ENCODE measurements at regions of chr10 and their contacts with region 1.

Region 1: DNA sequence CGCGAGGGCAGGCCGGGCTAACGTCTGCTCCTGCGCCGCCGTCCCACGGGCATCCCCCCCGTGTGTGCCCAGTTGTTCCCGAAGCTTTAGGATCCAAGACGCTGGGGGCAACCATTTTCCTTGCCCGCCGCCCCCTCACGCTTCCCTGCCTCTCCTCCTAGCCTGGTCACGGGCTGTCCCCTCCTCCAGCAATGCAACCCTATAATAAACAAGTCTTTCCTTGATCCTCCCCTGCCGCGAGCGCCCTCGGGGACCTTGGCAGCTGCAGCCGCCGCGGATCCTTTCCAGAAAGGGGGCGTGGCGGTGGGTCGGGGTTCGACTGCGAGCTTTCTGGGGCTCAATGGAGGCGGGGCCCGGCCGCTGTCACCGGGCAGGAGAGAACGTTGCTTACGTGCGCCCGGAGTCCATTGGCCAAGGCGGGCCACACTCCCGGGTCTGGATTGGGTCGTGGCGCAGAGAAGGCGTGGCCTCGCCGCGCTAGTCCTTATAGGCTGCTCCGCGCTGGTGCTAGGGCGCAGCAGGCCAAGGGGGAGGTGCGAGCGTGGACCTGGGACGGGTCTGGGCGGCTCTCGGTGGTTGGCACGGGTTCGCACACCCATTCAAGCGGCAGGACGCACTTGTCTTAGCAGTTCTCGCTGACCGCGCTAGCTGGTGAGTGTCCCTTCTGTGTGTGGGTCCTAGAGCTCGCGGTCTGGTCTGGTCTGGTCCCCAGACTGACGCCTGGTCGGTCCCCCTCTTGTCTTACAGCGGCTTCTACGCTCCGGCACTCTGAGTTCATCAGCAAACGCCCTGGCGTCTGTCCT is at the start of gene DDIT4:
- DNase-seq: peak; percentile 99 to 100
- H3K4me3 ChIP-seq: peak within 1 kb of the TSS; percentile 76 to 86
- H3K27ac ChIP-seq: peak within 1 kb of the TSS; percentile 93 to 98
- H3K4me1 ChIP-seq: peaks cover 8 to 22% of the 10 kb centered on the region in 2 donors
- H3K27me3 ChIP-seq: no peaks in the 10 kb centered on the region
- CTCF ChIP-seq: no peak
- total RNA-seq, gene DDIT4: 394 TPM

Region 2: DNA sequence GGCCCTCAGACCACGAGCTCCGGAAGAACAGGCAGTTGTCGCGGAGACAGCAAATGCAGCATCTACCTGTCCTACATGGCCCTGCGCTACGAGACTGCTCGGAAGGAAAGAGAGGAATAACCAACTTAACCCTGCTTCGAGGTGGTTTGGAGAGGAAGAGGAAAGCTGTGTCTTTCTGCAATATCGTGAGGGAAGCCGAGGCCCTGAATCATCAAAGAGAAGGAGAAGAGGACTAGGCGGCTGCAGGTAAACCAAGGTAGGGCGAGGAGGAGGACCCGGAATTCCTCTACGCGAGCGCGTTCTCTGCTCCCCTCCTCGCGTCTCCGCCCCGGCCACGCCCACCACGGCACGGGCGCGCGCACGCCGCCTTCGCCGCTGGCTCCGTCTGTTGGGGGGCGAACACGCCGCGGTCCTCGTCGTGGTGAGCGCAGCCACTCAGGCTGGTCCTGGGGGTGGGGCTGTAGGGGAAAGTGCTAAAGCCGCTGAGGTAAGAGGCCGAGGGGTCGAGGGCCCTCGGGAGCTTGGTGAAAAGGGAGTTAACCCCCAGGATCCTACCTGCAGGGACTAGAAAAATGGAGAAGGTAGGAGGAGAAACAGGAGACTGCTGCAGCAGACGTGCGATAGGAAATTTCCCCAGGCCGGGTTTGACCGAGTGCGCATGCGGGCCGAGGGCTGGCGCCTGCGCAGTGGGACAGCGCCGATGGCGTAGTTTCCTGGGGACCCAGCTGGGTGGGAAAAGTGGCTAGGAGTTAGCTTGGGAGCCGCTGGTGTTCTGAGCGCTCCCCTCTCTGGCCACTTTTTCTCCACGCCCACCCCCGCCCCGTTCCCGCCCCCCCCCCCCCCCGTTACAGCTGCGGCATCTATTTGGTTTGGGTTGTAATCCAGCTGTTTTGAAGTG is 57.7 kb before region 1 on chr10 and contains the starts of genes ANAPC16 and ASCC1:
- intact Hi-C with region 1: loop called (anchors 1 kb)
- DNase-seq: peak; percentile 66 to 94
- H3K4me3 ChIP-seq: peak within 1 kb of the TSS; percentile 64 to 71
- H3K27ac ChIP-seq: peak within 1 kb of the TSS; percentile 93 to 95
- H3K4me1 ChIP-seq: peaks cover 5 to 35% of the 10 kb centered on the region in 2 donors
- H3K27me3 ChIP-seq: no peaks in the 10 kb centered on the region
- CTCF ChIP-seq: no peak
- total RNA-seq, gene ANAPC16: 22.8 TPM
- total RNA-seq, gene ASCC1: 5.5 TPM

Region 3: GRCh38 chr10:72248468-72249151 is 25.0 kb before region 1 on chr10:
- intact Hi-C with region 1: loop called (anchors 1 kb)
- DNase-seq: peak; percentile 83 to 96
- H3K4me3 ChIP-seq: peak overlapping the region in 1 of 2 donors; percentile 44
- H3K27ac ChIP-seq: peak overlapping the region; percentile 91 to 97
- H3K4me1 ChIP-seq: peaks cover 49 to 85% of the 10 kb centered on the region in 2 donors
- H3K27me3 ChIP-seq: no peaks in the 10 kb centered on the region
- CTCF ChIP-seq: no peak

Region 4: DNA sequence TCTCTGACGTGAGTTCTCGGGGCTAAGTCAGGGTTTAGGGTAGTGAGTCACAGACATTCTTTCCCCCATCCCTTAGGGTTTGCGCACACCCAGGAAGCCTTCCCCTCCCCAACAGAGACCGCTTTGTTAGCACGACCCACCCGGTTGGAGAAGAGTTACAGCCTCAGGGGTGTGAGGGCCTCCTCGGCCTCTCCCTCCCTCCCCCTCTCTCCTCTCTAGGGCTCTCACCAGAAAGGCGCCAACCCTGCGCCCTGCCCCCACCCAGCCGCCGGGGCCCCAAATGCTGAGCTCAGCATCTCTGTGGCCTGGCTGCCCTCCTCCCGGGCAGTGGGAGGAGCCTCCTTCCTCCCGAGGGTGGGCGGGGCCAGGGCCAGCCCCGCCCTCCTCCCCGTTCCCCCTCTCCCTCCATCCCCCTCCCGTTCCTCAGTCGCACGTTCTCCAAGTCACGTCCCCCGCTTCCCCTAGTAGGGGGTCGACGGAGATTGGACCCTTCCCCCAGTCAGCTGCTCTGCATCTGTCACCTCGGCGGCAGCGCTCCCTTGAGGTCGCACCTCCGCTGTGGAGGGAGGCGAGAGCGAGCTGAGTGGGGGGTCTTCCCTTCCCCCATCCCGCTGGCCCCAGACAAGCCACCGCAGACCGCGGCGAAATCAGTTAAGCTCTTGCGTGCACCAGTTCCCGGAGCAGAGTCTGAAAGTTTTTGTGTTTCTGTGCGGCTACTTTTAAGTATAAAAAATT is 12.9 kb before region 1 on chr10:
- intact Hi-C with region 1: loop called (anchors 1 kb)
- DNase-seq: peak; percentile 58 to 89
- H3K4me3 ChIP-seq: peak overlapping the region; percentile 48 to 74
- H3K27ac ChIP-seq: peak overlapping the region; percentile 80 to 91
- H3K4me1 ChIP-seq: peaks cover 28 to 42% of the 10 kb centered on the region in 2 donors
- H3K27me3 ChIP-seq: no peaks in the 10 kb centered on the region
- CTCF ChIP-seq: no peak

Region 5: DNA sequence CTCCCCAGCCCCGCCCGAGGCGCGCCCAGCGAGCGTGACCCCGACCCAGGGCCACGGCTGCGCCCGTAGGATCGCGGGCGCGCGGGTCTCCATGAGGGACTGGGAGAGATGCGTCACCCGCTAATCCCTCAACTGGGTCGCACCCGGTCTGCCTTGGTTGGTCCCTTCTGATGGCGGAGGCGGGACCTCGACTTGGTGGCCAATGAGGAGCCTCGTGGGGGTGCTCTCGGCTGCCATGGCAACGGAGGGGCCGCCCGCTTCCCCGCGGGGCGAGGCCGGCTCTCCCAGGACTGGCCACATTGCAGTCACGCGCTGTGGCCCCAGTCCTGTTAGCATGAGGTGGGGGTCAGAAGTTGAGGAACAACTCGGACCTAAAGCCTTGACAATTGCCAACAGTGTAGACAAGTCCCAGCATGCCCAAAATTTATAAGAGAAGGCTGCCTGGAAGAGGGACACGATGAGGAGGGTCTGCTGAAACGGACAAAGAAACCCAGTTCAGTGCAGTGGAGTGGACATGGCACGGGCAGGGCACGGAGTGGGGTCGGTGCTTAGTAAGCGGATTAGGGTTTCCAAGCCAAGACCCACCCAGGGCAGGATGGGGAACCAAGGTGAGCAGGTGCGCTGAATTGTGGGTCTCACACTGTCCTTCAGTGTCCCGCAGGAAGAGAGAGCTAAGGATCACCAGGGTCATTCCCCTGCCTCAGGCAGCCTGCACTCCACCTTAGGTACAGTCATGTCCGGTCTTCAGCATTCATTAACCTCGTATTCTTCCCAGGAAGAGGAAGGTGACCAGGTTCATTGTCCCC is 24.6 kb after region 1 on chr10:
- intact Hi-C with region 1: loop called (anchors 1 kb)
- DNase-seq: peak; percentile 97 to 100
- H3K4me3 ChIP-seq: peak overlapping the region; percentile 65 to 77
- H3K27ac ChIP-seq: peak overlapping the region; percentile 89 to 92
- H3K4me1 ChIP-seq: peaks cover 0 to 12% of the 10 kb centered on the region in 2 donors
- H3K27me3 ChIP-seq: no peaks in the 10 kb centered on the region
- CTCF ChIP-seq: no peak

Region 6: DNA sequence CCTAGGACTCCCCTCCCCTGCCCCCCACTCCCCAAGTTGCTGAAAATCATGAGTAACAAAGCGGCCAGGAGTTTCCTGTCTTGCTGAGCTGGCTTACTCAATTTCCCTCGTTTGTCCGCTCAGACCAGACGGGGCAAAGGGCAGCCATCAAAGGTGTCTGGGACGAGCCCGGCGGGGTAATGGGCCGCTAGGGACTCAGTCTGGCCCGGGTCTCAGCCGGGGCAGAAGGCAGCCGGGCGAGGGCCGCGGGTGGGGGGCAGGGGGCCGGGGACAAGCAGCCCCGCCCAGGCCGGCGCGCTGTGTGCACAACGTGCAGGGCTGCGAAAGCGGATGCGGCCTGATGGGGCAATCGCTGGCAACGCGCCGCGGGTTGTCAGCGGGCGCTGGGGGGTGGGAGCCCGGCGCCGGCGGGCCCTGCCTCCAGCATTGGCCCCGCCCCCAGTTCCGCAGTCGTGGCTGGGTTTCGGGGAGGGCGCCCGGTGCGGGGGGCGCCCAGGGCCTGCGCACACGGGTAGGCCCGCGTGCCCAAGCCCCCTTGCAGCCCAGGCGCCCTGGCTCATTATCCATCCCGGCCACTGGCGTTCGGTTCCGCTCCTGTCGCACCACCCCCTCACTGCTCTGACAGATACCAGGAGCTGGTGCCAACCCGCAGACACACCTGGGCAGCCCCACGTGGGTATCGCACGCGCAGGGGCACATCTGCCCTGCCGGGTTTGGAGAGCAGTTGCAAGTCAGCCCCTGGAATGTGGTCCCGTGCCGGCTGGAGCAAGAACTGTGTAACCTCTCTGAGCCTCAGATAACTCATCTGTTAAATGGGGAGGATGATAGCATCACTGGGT is 46.0 kb after region 1 on chr10:
- intact Hi-C with region 1: loop called (anchors 5 kb)
- DNase-seq: peak; percentile 63 to 95
- H3K4me3 ChIP-seq: peak overlapping the region; percentile 63 to 66
- H3K27ac ChIP-seq: peak overlapping the region; percentile 83 to 90
- H3K4me1 ChIP-seq: peaks cover 21 to 45% of the 10 kb centered on the region in 2 donors
- H3K27me3 ChIP-seq: no peaks in the 10 kb centered on the region
- CTCF ChIP-seq: no peak

Region 7: GRCh38 chr10:72334825-72335393 is 61.3 kb after region 1 on chr10:
- intact Hi-C with region 1: loop called (anchors 2 kb)
- DNase-seq: peak; percentile 87 to 93
- H3K4me3 ChIP-seq: no peak overlapping the region
- H3K27ac ChIP-seq: peak overlapping the region; percentile 66 to 94
- H3K4me1 ChIP-seq: peaks cover 0 to 49% of the 10 kb centered on the region in 2 donors
- H3K27me3 ChIP-seq: no peaks in the 10 kb centered on the region
- CTCF ChIP-seq: no peak